ENCODE measurements at regions of chr9 and their contacts with region 1.

Region 1: GRCh38 chr9:36407122-36407723 is 7.2 kb upstream of the RNF38 start:
- DNase-seq: peak; percentile 71
- ATAC-seq: peak; percentile 82
- H3K4me3 Mint-ChIP-seq: no peak overlapping the region
- H3K27ac Mint-ChIP-seq: peak overlapping the region; percentile 29
- H3K4me1 Mint-ChIP-seq: peaks cover 5% of the 10 kb centered on the region
- H3K27me3 Mint-ChIP-seq: no peaks in the 10 kb centered on the region

Region 2: DNA sequence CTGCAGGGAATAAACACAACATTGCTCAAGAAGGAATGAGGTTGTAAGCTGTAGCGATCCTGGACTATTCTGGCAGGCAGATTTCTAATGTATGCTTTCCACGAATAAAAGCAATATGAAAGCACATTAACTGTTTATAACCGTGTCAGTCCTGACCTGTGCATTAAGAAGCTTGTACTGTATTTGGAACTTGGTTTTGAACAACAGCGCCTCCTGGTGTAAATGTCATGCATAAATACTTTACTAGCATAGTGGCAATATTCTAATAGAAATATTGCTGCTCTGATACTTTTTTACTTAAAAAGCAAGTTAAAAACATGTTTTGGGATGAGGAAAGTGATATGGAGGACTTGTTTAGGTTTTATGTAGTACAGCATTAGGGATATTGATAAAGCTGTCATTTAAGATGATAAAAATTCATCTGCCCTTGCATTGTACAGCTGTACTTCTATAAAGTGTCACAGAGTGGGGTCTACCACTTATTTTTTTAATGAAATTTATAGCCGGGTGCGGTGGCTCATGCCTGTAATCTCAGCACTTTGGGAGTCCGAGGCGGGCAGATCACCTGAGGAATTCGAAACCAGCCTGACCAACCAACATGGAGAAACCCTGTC is 78.3 kb before region 1 on chr9:
- CTCF ChIA-PET with region 1: interaction called, 10 read pairs
- DNase-seq: peak; percentile 52
- ATAC-seq: peak; percentile 79
- H3K4me3 Mint-ChIP-seq: no peak overlapping the region
- H3K27ac Mint-ChIP-seq: no peak overlapping the region
- H3K4me1 Mint-ChIP-seq: peaks cover 5% of the 10 kb centered on the region
- H3K27me3 Mint-ChIP-seq: no peaks in the 10 kb centered on the region

Region 3: GRCh38 chr9:36423206-36423605 is 16.0 kb after region 1 on chr9:
- CTCF ChIA-PET with region 1: interaction called, 17 read pairs
- DNase-seq: no peak
- ATAC-seq: no peak
- H3K4me3 Mint-ChIP-seq: no peak overlapping the region
- H3K27ac Mint-ChIP-seq: no peak overlapping the region
- H3K4me1 Mint-ChIP-seq: peaks cover 7% of the 10 kb centered on the region
- H3K27me3 Mint-ChIP-seq: no peaks in the 10 kb centered on the region

Region 4: DNA sequence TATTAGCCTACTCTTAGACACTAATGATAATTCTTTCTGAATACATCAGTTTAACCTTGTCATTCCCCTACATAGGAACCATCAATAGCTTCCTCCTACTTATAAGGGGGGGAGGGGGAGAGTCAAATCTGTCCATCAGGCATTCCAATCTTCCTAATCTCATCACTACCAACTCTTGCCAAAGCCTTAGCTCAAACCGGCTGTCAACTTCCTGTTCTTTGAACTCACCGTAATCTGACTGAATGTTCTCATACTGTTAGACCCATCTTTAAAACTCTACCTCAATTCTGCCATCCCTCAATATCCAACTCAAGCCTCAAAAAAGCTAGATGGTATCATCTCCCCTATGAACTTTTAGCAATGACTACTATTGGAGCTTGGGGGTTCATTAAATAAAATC is 34.7 kb after region 1 on chr9:
- CTCF ChIA-PET with region 1: interaction called, 16 read pairs
- DNase-seq: no peak
- ATAC-seq: no peak
- H3K4me3 Mint-ChIP-seq: no peak overlapping the region
- H3K27ac Mint-ChIP-seq: no peak overlapping the region
- H3K4me1 Mint-ChIP-seq: peaks cover 28% of the 10 kb centered on the region
- H3K27me3 Mint-ChIP-seq: no peaks in the 10 kb centered on the region

Region 5: GRCh38 chr9:36457836-36458429 is 50.7 kb after region 1 on chr9:
- CTCF ChIA-PET with region 1: interaction called, 37 read pairs
- DNase-seq: no peak
- ATAC-seq: peak; percentile 35
- H3K4me3 Mint-ChIP-seq: peak overlapping the region; percentile 62
- H3K27ac Mint-ChIP-seq: peak overlapping the region; percentile 80
- H3K4me1 Mint-ChIP-seq: peaks cover 49% of the 10 kb centered on the region
- H3K27me3 Mint-ChIP-seq: no peaks in the 10 kb centered on the region

Region 6: DNA sequence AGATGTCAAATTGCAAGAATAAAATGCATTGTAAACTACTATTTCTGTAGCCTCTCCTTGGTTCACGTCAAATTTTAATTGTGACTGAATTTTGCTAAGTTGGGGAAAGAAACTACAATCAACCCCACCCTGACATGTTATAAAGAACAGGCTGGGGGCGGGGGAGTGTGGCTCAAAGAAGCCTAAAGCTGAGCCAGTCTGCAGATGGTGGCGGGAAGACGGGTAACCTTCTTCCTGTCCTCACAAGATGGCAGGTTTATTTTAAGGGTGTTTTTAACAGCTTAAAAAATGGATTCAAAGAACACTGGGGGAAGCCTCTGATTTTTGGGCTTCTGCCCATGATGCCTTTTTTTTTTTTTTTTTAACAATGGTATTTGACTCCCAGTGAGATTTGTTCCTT is 96.9 kb after region 1 on chr9:
- CTCF ChIA-PET with region 1: interaction called, 15 read pairs
- DNase-seq: no peak
- ATAC-seq: no peak
- H3K4me3 Mint-ChIP-seq: no peak overlapping the region
- H3K27ac Mint-ChIP-seq: peak overlapping the region; percentile 40
- H3K4me1 Mint-ChIP-seq: peaks cover 18% of the 10 kb centered on the region
- H3K27me3 Mint-ChIP-seq: peaks cover 7% of the 10 kb centered on the region

Region 7: DNA sequence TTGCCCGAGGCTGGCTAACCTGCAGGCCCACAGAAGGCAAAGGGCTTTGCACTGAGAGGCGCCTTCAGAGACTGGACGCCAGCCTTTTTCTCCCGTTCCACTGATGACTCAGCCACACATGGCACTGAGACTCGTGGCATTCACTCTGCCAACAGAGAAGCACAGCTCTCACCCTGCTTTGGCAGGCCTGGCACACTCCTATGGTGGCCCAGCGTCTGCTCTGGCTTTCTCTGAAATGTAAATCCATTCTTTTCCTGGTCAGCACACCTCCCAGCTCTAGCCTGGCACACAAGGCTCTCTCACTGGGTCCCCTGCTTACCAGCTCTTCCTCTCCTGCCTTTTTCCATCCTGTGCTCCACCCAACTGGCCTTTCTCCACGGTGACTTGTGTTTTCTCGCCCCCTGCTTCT is 159.6 kb after region 1 on chr9:
- CTCF ChIA-PET with region 1: interaction called, 169 read pairs
- DNase-seq: no peak
- ATAC-seq: no peak
- H3K4me3 Mint-ChIP-seq: no peak overlapping the region
- H3K27ac Mint-ChIP-seq: no peak overlapping the region
- H3K4me1 Mint-ChIP-seq: peaks cover 4% of the 10 kb centered on the region
- H3K27me3 Mint-ChIP-seq: peaks cover 11% of the 10 kb centered on the region

Measured in activated CD8-positive, alpha-beta memory T cell treated with anti-CD3 and anti-CD28 coated beads, Interleukin-2, amount 10 ng/mL, durations not matched to agents 7 days and 5 days (primary cell).